K562 (cell line): ENCODE measurements at regions of chr6 and their contacts with region 1.

Region 1: GRCh38 chr6:96897383-96898240 is at the start of gene NDUFAF4:
- DNase-seq: peak; percentile 94 to 98 (median 96)
- ATAC-seq: peak; percentile 97
- H3K4me3 ChIP-seq: peak within 1 kb of the TSS; percentile 93
- H3K27ac ChIP-seq: peak within 1 kb of the TSS; percentile 96
- H3K4me1 ChIP-seq: peaks cover 4 to 13% of the 10 kb centered on the region in 2 experiments; a peak in 4 of 5 replicates
- H3K27me3 ChIP-seq: no peaks in the 10 kb centered on the region
- CTCF ChIP-seq: peak; percentile 83 to 93 (median 92)
- EP300 ChIP-seq: peak; percentile 24; the same call in 1 of the 2 replicates
- POLR2A ChIP-seq: peak; percentile 87
- RAD21 ChIP-seq: peak; percentile 59 to 65
- polyA plus RNA-seq, gene NDUFAF4: 361 to 418 TPM

Region 2: DNA sequence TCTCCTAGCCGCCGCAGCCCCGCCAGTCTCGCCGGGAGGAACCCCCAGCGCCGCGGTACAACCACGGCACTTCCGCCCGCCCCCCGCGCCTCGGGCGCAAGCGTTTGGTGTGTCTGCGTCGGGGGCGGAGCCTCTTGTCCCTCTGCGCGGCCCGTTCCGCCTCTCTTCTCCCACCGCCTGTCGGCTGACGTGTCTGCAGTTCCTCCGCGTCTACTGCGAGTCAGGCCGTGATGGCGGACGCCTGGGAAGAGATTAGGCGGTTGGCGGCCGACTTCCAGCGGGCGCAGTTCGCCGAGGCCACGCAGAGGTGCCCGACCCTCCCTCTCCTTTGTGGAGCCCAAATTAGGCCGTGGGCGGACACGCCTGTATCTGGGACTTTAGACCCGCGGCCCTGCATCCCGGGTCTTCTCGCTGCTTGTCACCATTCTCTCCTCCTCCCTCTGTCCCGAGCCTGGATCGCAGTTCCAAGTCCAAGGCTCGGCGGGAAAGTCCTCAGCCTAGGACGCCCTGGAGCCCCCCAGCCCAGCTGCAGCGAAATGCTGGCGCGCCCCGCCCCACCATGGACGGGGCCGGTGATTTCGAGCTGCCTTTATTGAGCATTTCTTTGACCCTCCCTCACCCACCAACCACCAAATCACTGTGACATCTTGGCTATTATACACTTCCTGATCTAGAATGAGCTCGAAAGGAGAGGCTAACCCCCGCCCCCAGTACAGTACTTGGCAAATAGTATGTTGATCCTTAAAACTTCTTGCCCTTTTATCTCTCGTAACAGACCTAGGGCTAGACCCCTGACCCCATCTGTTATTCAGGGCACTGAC is 375.8 kb before region 1 on chr6 and contains the start of gene UFL1:
- CTCF ChIA-PET with region 1: interaction called, 3 read pairs
- POLR2A ChIA-PET with region 1: no interaction called
- in situ Hi-C with region 1: no loop called
- intact Hi-C with region 1: loop called (anchors 5 kb)
- DNase-seq: peak; percentile 78 to 96 (median 82)
- ATAC-seq: peak; percentile 95
- H3K4me3 ChIP-seq: peak within 1 kb of the TSS; percentile 87
- H3K27ac ChIP-seq: peak within 1 kb of the TSS; percentile 97
- H3K4me1 ChIP-seq: peaks cover 2 to 3% of the 10 kb centered on the region in 2 experiments; a peak in 3 of 5 replicates
- H3K27me3 ChIP-seq: no peaks in the 10 kb centered on the region
- CTCF ChIP-seq: 0 out of 6 replicates have a peak, but pooled peaks of 1 of the 3 experiments have one; percentile 6
- EP300 ChIP-seq: peak; percentile 15
- POLR2A ChIP-seq: peak; percentile 97
- RAD21 ChIP-seq: no peak
- polyA plus RNA-seq, gene UFL1: 21.3 to 23.1 TPM

Region 3: GRCh38 chr6:96760153-96760687 is 137.4 kb before region 1 on chr6:
- CTCF ChIA-PET with region 1: no interaction called
- POLR2A ChIA-PET with region 1: no interaction called
- in situ Hi-C with region 1: no loop called
- intact Hi-C with region 1: loop called (anchors 5 kb)
- DNase-seq: no peak
- ATAC-seq: no peak; the same call in 2 of the 3 replicates
- H3K4me3 ChIP-seq: no peak overlapping the region
- H3K27ac ChIP-seq: no peak overlapping the region
- H3K4me1 ChIP-seq: no peaks in the 10 kb centered on the region
- H3K27me3 ChIP-seq: peaks cover 6 to 23% of the 10 kb centered on the region in 2 experiments; a peak in 3 of 5 replicates
- CTCF ChIP-seq: peak in 1 of 3 experiments; percentile 18; a peak in 2 of 6 replicates
- EP300 ChIP-seq: no peak
- POLR2A ChIP-seq: no peak
- RAD21 ChIP-seq: peak in 1 of 2 experiments; percentile 33; a peak in 1 of 4 replicates

Region 4: GRCh38 chr6:96923871-96924493 is 26.4 kb after region 1 on chr6:
- CTCF ChIA-PET with region 1: no interaction called
- POLR2A ChIA-PET with region 1: interaction called, 3 read pairs
- in situ Hi-C with region 1: no loop called
- intact Hi-C with region 1: loop called (anchors 1 kb)
- DNase-seq: no peak
- ATAC-seq: peak; percentile 80
- H3K4me3 ChIP-seq: peak overlapping the region; percentile 48
- H3K27ac ChIP-seq: peak overlapping the region; percentile 90
- H3K4me1 ChIP-seq: peaks cover 11 to 35% of the 10 kb centered on the region in 2 experiments
- H3K27me3 ChIP-seq: no peaks in the 10 kb centered on the region
- CTCF ChIP-seq: 0 out of 6 replicates have a peak, but pooled peaks of 1 of the 3 experiments have one; percentile 1
- EP300 ChIP-seq: no peak
- POLR2A ChIP-seq: peak; percentile 84
- RAD21 ChIP-seq: no peak

Region 5: DNA sequence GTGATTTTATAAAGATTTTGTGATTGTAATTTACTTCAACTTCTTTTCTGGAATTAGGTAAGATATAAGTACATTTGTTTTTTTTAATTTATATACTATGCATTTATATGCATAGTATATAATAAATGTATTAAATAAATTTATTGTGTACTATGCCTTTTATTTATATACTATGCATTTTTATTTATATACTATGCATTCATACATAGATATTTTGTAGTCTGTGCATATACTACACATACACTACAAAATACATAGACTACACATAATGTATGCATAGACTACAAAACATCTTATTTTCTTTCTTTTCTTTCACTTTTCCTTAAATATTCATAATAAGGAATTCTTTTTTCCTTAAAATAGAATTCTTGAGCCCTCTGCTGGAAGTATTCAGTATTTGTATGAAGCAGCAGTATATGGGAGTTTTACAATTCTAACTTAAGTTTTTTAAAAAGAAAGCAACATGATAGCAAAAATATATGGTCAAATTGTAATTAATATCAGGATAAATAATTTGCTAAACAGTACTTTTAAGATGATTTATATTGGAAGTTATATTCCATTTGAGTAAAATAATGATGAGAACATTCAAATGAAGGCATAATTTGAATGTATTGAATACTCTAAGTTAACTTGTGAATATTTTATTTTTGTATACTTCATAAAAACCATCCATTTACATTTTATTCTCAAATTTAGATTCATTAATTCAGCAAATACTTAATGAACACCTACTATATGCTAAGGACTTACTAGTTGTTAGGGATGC is 156.2 kb after region 1 on chr6:
- CTCF ChIA-PET with region 1: interaction called, 50 read pairs
- POLR2A ChIA-PET with region 1: no interaction called
- in situ Hi-C with region 1: loop called (anchors 5 kb)
- intact Hi-C with region 1: loop called (anchors 1 kb)
- DNase-seq: peak in 1 of 4 experiments; percentile 16
- ATAC-seq: no peak; the same call in 2 of the 3 replicates
- H3K4me3 ChIP-seq: no peak overlapping the region
- H3K27ac ChIP-seq: no peak overlapping the region
- H3K4me1 ChIP-seq: no peaks in the 10 kb centered on the region
- H3K27me3 ChIP-seq: peaks cover 0 to 4% of the 10 kb centered on the region in 2 experiments; a peak in 3 of 5 replicates
- CTCF ChIP-seq: peak in 2 of 3 experiments; percentile 18 to 68; a peak in 3 of 6 replicates
- EP300 ChIP-seq: no peak
- POLR2A ChIP-seq: no peak
- RAD21 ChIP-seq: peak; percentile 83 to 92

Region 6: GRCh38 chr6:97405818-97406409 is 508.3 kb after region 1 on chr6:
- CTCF ChIA-PET with region 1: no interaction called
- POLR2A ChIA-PET with region 1: no interaction called
- in situ Hi-C with region 1: no loop called
- intact Hi-C with region 1: no loop called
- DNase-seq: no peak
- ATAC-seq: no peak
- H3K4me3 ChIP-seq: no peak overlapping the region
- H3K27ac ChIP-seq: no peak overlapping the region
- H3K4me1 ChIP-seq: no peaks in the 10 kb centered on the region
- H3K27me3 ChIP-seq: no peaks in the 10 kb centered on the region
- CTCF ChIP-seq: no peak
- EP300 ChIP-seq: no peak
- POLR2A ChIP-seq: no peak
- RAD21 ChIP-seq: no peak